ENCODE measurements at regions of chr1 and their contacts with region 1.

Region 1: GRCh38 chr1:100866041-100866900 is 28.4 kb downstream of the EXTL2 start:
- H3K4me3 ChIP-seq: no peak overlapping the region
- H3K27ac ChIP-seq: no peak overlapping the region
- H3K4me1 ChIP-seq: no peaks in the 10 kb centered on the region
- CTCF ChIP-seq: peak; percentile 38; the same call in 1 of the 2 replicates

Region 2: DNA sequence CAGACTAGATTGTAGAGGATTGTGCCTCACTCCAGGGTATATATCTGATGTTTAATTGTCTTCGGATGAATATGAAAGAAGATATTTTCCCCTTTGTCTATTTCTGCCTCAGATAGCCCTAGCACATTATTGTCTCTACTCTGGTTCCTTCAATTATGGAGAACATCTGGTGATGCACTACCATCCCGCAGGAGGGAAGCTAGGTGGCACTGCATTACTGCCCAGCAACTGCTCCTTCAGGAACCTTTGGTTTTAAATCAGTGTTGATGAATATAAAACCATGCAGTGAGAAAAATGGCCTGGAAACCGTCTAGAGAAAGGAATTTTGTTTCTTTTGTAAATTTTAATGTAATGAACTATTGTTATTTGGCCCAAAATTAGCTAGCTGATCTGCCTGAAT is 259.8 kb before region 1 on chr1:
- CTCF ChIA-PET with region 1: interaction called, 16 read pairs
- POLR2A ChIA-PET with region 1: no interaction called
- H3K4me3 ChIP-seq: no peak overlapping the region
- H3K27ac ChIP-seq: no peak overlapping the region
- H3K4me1 ChIP-seq: no peaks in the 10 kb centered on the region
- CTCF ChIP-seq: peak; percentile 44; the same call in 1 of the 2 replicates

Region 3: GRCh38 chr1:100835866-100836842 is 30.1 kb before region 1 on chr1:
- CTCF ChIA-PET with region 1: interaction called, 15 read pairs
- POLR2A ChIA-PET with region 1: no interaction called
- H3K4me3 ChIP-seq: no peak overlapping the region
- H3K27ac ChIP-seq: no peak overlapping the region
- H3K4me1 ChIP-seq: no peaks in the 10 kb centered on the region
- CTCF ChIP-seq: no peak

Region 4: GRCh38 chr1:100883963-100884362 is 17.7 kb after region 1 on chr1:
- CTCF ChIA-PET with region 1: interaction called, 14 read pairs
- POLR2A ChIA-PET with region 1: no interaction called
- H3K4me3 ChIP-seq: no peak overlapping the region
- H3K27ac ChIP-seq: no peak overlapping the region
- H3K4me1 ChIP-seq: peaks cover 3% of the 10 kb centered on the region; the same call in 1 of the 2 replicates
- CTCF ChIP-seq: no peak

Region 5: DNA sequence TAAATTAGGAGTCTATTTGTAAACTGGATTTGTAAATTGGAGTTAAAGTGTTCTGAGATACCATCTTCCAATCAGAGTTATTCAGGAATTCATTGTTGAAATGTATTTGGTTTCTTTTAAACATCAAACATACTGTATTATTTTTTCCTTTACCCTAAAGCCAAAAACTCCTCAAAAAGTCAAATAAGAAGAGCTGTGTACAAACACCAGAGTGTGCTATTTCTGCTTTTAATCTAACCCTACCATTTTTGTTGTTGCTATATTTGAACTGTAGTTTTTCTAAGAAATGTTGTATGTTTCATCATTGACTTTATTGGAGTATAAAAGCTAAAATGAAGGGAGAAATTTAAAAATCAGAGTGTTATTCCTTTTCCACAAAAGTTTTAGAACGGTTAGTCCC is 65.4 kb after region 1 on chr1:
- CTCF ChIA-PET with region 1: no interaction called
- POLR2A ChIA-PET with region 1: no interaction called
- H3K4me3 ChIP-seq: no peak overlapping the region
- H3K27ac ChIP-seq: no peak overlapping the region
- H3K4me1 ChIP-seq: no peaks in the 10 kb centered on the region
- CTCF ChIP-seq: no peak

Measured in HEK293 (cell line).